MCF 10A (cell line): ENCODE measurements at regions of chr3 and their contacts with region 1.

Region 1: DNA sequence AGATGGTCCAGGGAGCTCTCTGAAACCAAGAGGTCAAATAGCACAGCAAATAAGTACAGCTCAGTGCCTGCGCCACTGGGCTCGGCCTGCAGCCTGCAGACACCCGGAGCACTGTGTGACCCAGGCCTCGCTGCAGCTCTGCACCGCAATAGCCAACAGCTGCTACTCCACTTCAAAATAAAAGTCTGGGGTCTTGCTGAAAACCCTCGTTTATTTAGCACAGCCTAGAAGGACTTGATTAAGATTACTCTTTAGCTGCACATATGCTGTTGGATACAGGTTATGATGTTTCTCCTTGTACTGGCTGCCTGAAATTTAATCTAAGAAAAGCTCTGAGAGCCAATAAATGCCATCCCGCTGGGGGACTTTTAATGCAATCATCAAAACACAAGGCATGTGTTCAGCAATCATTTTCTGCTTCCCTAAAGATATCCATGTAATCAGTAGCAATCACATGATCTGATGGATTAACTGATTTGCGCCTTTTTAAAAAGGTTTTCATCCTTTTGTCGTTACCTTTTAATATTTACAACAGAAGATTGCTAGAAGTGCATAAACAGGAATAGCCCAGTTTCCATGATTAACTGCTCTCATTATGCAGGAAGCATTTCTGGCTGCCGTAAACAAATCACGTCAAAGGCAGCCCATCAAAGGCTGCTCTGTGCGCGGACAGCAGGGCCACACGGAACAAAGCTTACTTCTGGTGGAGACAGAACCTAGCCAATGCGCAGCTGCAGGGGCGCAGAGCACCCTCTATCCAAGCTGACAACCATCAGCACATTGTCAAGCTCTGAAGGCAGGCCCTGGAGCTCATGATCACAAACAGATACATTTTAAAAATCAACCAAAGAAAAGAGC is 58.8 kb downstream of the CLASP2 start:
- DNase-seq: peak; percentile 53
- H3K4me3 Mint-ChIP-seq: peak overlapping the region; percentile 71
- H3K27ac Mint-ChIP-seq: peak overlapping the region; percentile 63
- H3K4me1 Mint-ChIP-seq: peaks cover 37% of the 10 kb centered on the region
- H3K27me3 Mint-ChIP-seq: no peaks in the 10 kb centered on the region
- CTCF ChIP-seq: no peak

Region 2: DNA sequence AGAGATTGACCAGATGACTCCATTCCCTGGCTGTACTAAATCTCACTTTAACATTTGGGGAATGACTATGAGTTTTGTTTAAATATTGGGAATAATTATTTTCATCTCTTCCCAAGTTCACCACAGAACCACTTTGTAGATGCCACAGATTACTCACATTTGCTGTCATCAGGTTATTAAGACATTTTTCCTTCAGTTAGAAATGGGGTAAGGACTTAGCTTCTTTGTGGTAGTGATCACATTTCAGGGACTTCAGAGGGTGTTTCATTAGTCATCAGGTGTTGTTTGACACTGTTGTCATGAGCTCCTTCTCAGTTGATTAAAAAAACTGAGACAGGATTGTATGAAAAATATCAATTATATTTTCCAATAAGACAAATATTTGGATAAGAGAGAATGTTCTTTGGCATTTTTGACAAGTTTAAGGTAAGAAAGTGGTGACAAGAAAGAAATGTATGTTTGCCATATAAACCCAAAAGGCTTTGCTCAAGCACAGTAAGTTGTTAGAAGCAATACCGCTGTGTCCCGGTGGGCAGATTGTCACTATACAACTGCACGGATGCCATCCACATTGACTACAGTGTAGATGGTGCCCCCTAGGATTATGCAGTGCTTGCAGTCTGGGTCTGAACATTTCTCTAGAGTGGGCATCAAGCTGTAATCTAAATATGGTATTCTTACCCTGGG is 359.7 kb before region 1 on chr3:
- CTCF ChIA-PET with region 1: no interaction called
- POLR2A ChIA-PET with region 1: no interaction called
- intact Hi-C with region 1: no loop called
- DNase-seq: peak; percentile 32
- H3K4me3 Mint-ChIP-seq: no peak overlapping the region
- H3K27ac Mint-ChIP-seq: peak overlapping the region; percentile 94
- H3K4me1 Mint-ChIP-seq: peaks cover 19% of the 10 kb centered on the region
- H3K27me3 Mint-ChIP-seq: no peaks in the 10 kb centered on the region
- CTCF ChIP-seq: no peak

Region 3: GRCh38 chr3:33645060-33645647 is 14.1 kb before region 1 on chr3:
- CTCF ChIA-PET with region 1: interaction called, 5 read pairs
- POLR2A ChIA-PET with region 1: interaction called, 22 read pairs
- intact Hi-C with region 1: no loop called
- DNase-seq: peak; percentile 46
- H3K4me3 Mint-ChIP-seq: peak overlapping the region; percentile 64
- H3K27ac Mint-ChIP-seq: no peak overlapping the region
- H3K4me1 Mint-ChIP-seq: peaks cover 16% of the 10 kb centered on the region
- H3K27me3 Mint-ChIP-seq: no peaks in the 10 kb centered on the region
- CTCF ChIP-seq: no peak

Region 4: GRCh38 chr3:33798411-33799201 is 139.4 kb after region 1 on chr3 and contains the start of gene PDCD6IP:
- CTCF ChIA-PET with region 1: no interaction called
- POLR2A ChIA-PET with region 1: interaction called, 10 read pairs
- intact Hi-C with region 1: no loop called
- DNase-seq: peak; percentile 92
- H3K4me3 Mint-ChIP-seq: peak within 1 kb of the TSS; percentile 90
- H3K27ac Mint-ChIP-seq: peak within 1 kb of the TSS; percentile 93
- H3K4me1 Mint-ChIP-seq: peaks cover 41% of the 10 kb centered on the region
- H3K27me3 Mint-ChIP-seq: no peaks in the 10 kb centered on the region
- CTCF ChIP-seq: no peak
- total RNA-seq, gene PDCD6IP: 286 and 304 TPM in 2 replicates